ENCODE measurements at regions of chr3 and their contacts with region 1.

Region 1: GRCh38 chr3:19898721-19899120 is 35.3 kb downstream of the EFHB start:
- DNase-seq: no peak
- H3K4me3 ChIP-seq: no peak overlapping the region
- H3K27ac ChIP-seq: no peak overlapping the region
- H3K4me1 ChIP-seq: peaks cover 0 to 7% (median 0%) of the 10 kb centered on the region in 3 donors
- H3K27me3 ChIP-seq: no peaks in the 10 kb centered on the region
- CTCF ChIP-seq: no peak
- POLR2A ChIP-seq: no peak

Region 2: GRCh38 chr3:19822805-19823204 is 75.9 kb before region 1 on chr3:
- intact Hi-C with region 1: no loop called
- DNase-seq: no peak
- H3K4me3 ChIP-seq: no peak overlapping the region
- H3K27ac ChIP-seq: no peak overlapping the region
- H3K4me1 ChIP-seq: no peaks in the 10 kb centered on the region
- H3K27me3 ChIP-seq: no peaks in the 10 kb centered on the region
- CTCF ChIP-seq: no peak
- POLR2A ChIP-seq: no peak

Region 3: DNA sequence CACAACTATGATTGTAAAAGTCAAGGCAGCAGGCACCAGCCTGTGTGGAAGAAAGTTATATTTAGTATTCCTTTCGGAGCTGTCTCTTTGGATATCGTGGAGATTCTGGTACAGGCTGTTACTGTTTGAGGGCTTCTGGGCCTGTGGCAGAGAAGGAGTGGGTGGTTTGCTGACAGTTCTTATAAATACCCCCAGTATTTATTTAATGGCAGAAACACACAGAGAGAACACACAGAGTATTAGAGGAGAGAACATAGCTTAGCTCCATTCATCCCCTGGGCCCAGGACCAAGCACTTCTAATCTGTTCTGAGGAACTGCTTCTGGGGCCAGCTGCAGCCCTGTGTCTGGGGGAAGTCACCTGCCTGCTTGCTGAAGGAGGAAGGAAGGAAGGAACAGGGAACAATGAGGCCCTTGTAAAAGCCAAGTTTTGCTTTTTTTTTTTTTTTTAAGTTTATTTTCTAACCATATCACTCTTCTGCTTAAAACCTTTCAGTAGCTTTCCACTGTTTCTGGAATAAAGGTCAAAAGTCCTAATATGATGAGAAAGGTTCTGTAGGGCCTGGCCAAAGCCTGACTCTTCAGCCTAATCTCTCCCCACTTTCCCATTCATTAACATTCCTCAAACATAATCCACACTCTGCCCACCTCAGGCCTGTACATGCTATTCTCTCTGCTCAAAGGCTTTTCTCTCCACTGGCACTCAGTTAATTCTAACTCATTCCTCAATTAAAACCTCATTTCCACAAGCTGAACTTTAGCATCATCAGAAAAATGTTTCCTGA is 125.1 kb after region 1 on chr3:
- intact Hi-C with region 1: loop called (anchors 10 kb)
- DNase-seq: no peak
- H3K4me3 ChIP-seq: no peak overlapping the region
- H3K27ac ChIP-seq: peak overlapping the region in 3 of 4 donors; percentile 49 to 77 (median 65)
- H3K4me1 ChIP-seq: peaks cover 3 to 22% (median 15%) of the 10 kb centered on the region in 3 donors
- H3K27me3 ChIP-seq: no peaks in the 10 kb centered on the region
- CTCF ChIP-seq: no peak
- POLR2A ChIP-seq: no peak

Region 4: GRCh38 chr3:20185701-20186598 is 287.2 kb after region 1 on chr3 and contains the start of gene SGO1:
- intact Hi-C with region 1: loop called (anchors 10 kb)
- DNase-seq: peak; percentile 98
- H3K4me3 ChIP-seq: peak within 1 kb of the TSS; percentile 56 to 74 (median 72)
- H3K27ac ChIP-seq: peak within 1 kb of the TSS; percentile 87 to 96 (median 92)
- H3K4me1 ChIP-seq: peaks cover 0 to 32% (median 8%) of the 10 kb centered on the region in 3 donors
- H3K27me3 ChIP-seq: no peaks in the 10 kb centered on the region
- CTCF ChIP-seq: peak in 2 of 6 experiments; percentile 9
- POLR2A ChIP-seq: peak in 3 of 4 donors; percentile 61 to 82 (median 74)
- total RNA-seq, gene SGO1: 1.3 to 9.8 (median 5.7) TPM